GM12878 (cell line): ENCODE measurements at regions of chr2 and their contacts with region 1.

Region 1: GRCh38 chr2:162890690-162891311 is 52.2 kb upstream of the KCNH7 start:
- DNase-seq: peak; percentile 11
- ATAC-seq: peak; percentile 88
- H3K4me3 ChIP-seq: no peak overlapping the region
- H3K27ac ChIP-seq: no peak overlapping the region
- H3K4me1 ChIP-seq: no peaks in the 10 kb centered on the region
- H3K27me3 ChIP-seq: no peaks in the 10 kb centered on the region
- CTCF ChIP-seq: peak; percentile 74 to 77 (median 76)
- EP300 ChIP-seq: no peak
- POLR2A ChIP-seq: no peak
- RAD21 ChIP-seq: peak; percentile 75

Region 2: GRCh38 chr2:162795312-162795711 is 95.5 kb before region 1 on chr2:
- CTCF ChIA-PET with region 1: no interaction called
- POLR2A ChIA-PET with region 1: no interaction called
- RAD21 ChIA-PET with region 1: no interaction called
- SMC1A ChIA-PET with region 1: no interaction called
- in situ Hi-C with region 1: no loop called
- intact Hi-C with region 1: no loop called
- DNase-seq: no peak
- ATAC-seq: peak; percentile 59; the same call in 2 of the 3 replicates
- H3K4me3 ChIP-seq: no peak overlapping the region
- H3K27ac ChIP-seq: no peak overlapping the region
- H3K4me1 ChIP-seq: no peaks in the 10 kb centered on the region
- H3K27me3 ChIP-seq: no peaks in the 10 kb centered on the region
- CTCF ChIP-seq: peak; percentile 17 to 42 (median 40); a peak in 4 of 6 replicates
- EP300 ChIP-seq: no peak
- POLR2A ChIP-seq: no peak
- RAD21 ChIP-seq: peak; percentile 72

Region 3: GRCh38 chr2:163132850-163133249 is 242.0 kb after region 1 on chr2:
- CTCF ChIA-PET with region 1: interaction called, 18 read pairs
- POLR2A ChIA-PET with region 1: no interaction called
- RAD21 ChIA-PET with region 1: interaction called, 16 read pairs
- SMC1A ChIA-PET with region 1: interaction called, 14 read pairs
- in situ Hi-C with region 1: loop called (anchors 10 kb)
- intact Hi-C with region 1: loop called (anchors 1 kb)
- DNase-seq: no peak
- ATAC-seq: peak; percentile 46; the same call in 2 of the 3 replicates
- H3K4me3 ChIP-seq: no peak overlapping the region
- H3K27ac ChIP-seq: no peak overlapping the region
- H3K4me1 ChIP-seq: no peaks in the 10 kb centered on the region
- H3K27me3 ChIP-seq: no peaks in the 10 kb centered on the region
- CTCF ChIP-seq: peak; percentile 22 to 40 (median 32); a peak in 3 of 6 replicates
- EP300 ChIP-seq: no peak
- POLR2A ChIP-seq: no peak
- RAD21 ChIP-seq: peak; percentile 38; the same call in 1 of the 2 replicates